ENCODE measurements at regions of chr20 and their contacts with region 1.

Region 1: DNA sequence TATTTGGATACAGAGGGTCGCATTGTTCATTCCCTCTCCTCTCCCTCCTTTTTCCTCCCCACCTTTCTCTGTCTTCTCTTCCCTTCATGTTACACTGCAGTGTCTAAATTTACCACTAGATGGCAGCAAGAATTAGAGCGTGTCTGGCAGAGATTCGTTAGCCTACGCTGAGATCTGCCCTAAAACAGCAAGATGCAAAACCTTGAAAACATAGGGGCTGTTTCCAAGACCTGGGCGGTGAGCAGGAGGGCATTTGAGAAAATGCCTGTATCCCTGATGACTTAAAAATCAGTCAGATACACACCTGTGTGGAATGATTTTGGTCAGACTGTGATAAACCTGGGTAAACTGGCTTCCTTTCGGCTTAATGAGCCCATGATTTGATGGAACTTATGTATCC is 101.5 kb upstream of the ISM1 start:
- DNase-seq: peak; percentile 38
- H3K4me3 Mint-ChIP-seq: no peak overlapping the region
- H3K27ac Mint-ChIP-seq: no peak overlapping the region
- H3K4me1 Mint-ChIP-seq: no peaks in the 10 kb centered on the region
- H3K27me3 Mint-ChIP-seq: no peaks in the 10 kb centered on the region

Region 2: GRCh38 chr20:13261460-13262301 is 142.1 kb after region 1 on chr20:
- CTCF ChIA-PET with region 1: interaction called, 12 read pairs
- DNase-seq: peak; percentile 80
- H3K4me3 Mint-ChIP-seq: no peak overlapping the region
- H3K27ac Mint-ChIP-seq: no peak overlapping the region
- H3K4me1 Mint-ChIP-seq: peaks cover 6% of the 10 kb centered on the region
- H3K27me3 Mint-ChIP-seq: peaks cover 9% of the 10 kb centered on the region

Region 3: DNA sequence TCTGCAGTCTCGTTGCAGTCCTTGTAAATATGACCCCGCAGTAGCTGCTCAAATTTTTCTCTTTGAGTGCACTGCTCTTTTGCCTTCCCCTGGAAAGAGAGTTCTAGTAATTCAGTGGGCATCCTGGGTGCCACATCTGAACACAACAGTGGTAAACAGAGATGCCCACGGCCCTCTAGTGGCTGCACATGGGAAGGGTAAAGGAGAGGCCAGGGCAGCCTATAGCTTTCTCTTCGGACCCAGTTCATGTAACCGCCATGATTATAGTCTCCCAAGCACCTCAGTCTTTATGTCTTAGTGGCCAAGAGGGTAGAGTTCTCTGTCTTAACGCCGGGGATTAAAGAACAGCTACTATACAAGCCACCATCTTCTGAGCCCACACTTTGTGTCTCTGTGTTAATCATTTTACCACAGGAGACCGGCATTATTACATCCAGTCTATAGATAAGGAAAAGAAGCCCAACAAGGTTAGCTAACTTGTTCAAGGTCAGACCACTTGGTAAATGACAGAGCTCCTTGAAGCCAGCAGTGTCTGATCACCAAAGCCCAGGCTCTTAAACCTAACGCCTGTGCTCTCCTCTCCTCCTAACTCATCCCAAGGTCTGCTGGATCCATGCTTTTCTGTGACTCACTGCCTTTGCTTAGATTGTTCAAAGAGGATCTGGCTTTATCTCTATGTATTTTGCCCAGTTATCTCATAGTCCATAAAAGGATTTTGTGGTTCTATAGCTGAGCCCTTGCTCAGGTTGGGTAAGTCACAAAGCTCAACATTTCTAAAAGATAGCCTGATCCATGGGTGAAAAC is 183.3 kb after region 1 on chr20:
- CTCF ChIA-PET with region 1: interaction called, 69 read pairs
- DNase-seq: peak; percentile 68
- H3K4me3 Mint-ChIP-seq: no peak overlapping the region
- H3K27ac Mint-ChIP-seq: no peak overlapping the region
- H3K4me1 Mint-ChIP-seq: no peaks in the 10 kb centered on the region
- H3K27me3 Mint-ChIP-seq: no peaks in the 10 kb centered on the region

Measured in activated naive CD4-positive, alpha-beta T cell treated with anti-CD3 and anti-CD28 coated beads, Interleukin-2, amount 10 ng/mL, durations not matched to agents 7 days and 5 days (primary cell).